Activated CD4-positive, alpha-beta T cell treated with anti-CD3 and anti-CD28 coated beads for 36 hours (primary cell): ENCODE measurements at regions of chr4 and their contacts with region 1.

Region 1: DNA sequence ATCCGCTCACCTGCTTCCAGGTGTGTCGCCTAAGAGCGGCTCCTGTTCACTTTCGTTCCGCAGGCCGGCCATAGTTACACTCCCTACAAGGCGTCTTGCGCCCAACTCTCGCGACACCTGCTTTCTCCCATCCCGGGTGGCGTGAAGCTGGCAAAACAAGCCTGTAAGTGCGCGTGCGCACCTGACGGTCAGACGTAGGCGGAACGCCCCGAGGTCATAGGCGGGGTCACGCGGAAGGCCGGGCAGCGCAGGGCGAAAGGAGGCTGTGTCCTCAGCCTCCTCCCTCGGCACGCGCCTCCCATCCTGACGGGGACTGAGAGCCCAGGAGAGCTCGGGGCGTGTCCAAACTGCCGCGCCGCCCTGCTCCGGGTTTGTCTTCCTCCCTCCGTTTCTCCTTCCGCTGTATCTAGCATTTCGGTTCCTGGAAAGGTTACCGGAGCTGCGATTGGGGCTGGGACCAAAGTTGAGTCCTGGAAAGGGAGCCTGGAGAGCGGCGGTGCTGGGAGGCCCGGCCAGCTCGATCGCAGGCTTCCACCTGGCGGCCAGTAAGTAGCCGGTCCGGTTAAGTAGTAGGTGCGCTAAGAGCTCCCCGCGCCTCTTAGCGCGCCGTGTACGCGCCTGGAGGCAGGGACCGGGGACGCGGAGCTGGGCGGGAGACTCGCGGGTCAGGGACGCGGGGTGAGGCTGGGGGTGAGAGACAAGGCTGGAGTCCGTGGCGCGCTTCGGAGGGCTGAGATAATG is at the starts of genes ABHD18 and MFSD8:
- DNase-seq: peak; percentile 100
- ATAC-seq: peak; percentile 97
- H3K4me3 Mint-ChIP-seq: peak within 1 kb of the TSS; percentile 90
- H3K27ac Mint-ChIP-seq: peak within 1 kb of the TSS; percentile 97
- H3K4me1 Mint-ChIP-seq: peaks cover 32% of the 10 kb centered on the region
- H3K27me3 Mint-ChIP-seq: no peaks in the 10 kb centered on the region
- total RNA-seq, gene ABHD18: 23.5 to 24.2 TPM
- total RNA-seq, gene MFSD8: 10.2 to 13.8 TPM

Region 2: DNA sequence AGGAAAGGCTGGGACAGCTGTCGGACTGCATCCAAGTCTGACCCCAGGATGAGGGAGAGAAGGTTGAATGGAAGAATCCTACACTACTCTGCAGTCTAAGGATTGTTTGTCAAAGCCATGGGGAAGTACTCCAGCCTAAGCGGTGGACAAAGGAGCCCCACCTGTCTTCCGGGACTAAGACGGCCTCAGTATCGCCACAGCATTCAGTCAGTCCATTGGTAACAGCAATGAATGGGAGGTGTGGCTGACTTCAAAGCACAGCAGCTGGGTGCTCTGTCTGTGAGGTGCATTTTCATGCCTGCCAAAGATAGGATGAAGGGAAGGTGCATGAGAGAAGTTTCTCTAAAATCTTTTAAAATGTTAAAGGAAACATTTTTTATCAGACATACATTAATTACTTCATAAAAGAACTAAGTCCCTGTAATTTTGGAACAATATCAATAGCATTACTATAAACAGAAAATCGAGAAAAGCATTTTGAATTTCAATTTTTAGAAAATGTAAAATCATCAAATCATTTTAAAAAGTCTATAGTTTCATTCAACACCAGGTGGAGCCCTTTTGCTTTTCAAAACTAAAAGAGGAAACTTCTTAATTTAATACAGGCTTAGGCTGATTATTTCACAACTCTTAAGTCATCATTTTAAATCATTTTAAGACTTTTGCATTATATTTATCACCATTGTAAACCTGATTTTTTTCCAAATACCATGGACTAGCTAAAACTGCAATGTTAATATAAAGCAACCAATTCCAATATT is 360.1 kb before region 1 on chr4:
- CTCF ChIA-PET with region 1: no interaction called
- POLR2A ChIA-PET with region 1: no interaction called
- intact Hi-C with region 1: no loop called
- DNase-seq: no peak
- ATAC-seq: no peak
- H3K4me3 Mint-ChIP-seq: no peak overlapping the region
- H3K27ac Mint-ChIP-seq: no peak overlapping the region
- H3K4me1 Mint-ChIP-seq: no peaks in the 10 kb centered on the region
- H3K27me3 Mint-ChIP-seq: peaks cover 7% of the 10 kb centered on the region

Region 3: DNA sequence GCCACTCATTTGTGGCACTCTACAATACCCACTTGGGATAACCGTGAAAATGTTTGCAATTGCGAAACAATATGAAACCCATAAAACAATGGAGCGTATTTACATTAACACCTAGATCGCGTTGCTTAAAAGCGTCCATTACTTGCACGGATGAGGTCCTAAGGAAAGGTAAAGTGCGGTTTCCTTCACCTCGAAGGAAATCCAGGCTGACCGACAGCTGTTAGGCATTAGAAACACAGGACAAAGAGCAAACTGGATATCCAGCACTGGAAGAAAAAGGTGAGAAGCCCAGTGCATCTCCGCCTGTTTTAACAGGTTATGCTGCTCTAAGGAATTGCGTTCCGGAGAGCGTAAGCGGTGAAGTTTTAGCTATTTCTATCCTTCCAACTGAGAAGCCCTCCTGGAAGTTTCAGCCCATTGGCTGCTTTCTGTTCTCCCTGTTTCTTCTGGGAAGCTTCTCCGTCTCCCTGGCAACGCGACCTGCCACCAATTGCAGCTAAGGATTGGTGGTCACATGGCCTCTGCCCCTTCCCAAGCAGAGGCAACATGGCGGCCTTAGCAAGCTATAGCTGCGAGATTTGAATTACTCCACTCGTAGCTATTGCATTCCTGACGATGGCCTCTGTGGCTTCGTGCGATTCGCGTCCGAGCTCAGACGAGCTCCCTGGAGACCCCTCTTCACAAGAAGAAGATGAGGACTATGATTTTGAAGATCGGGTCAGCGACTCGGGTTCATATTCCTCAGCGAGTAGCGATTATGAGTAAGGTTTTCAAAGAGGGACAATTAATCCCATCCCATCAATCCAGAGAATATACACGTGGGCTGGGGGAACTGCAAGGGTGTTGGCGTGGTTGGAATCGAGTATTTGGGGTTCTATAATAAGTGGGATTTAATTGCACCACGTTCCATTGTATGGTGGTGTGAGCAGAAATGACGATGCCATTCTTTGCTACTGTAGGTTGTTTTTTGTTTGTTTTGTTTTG is 332.5 kb before region 1 on chr4 and contains the start of gene INTU:
- CTCF ChIA-PET with region 1: no interaction called
- POLR2A ChIA-PET with region 1: no interaction called
- intact Hi-C with region 1: loop called in 1 of 2 experiments (anchors 2 kb)
- DNase-seq: peak; percentile 72
- ATAC-seq: peak; percentile 99
- H3K4me3 Mint-ChIP-seq: peak within 1 kb of the TSS; percentile 75
- H3K27ac Mint-ChIP-seq: peak within 1 kb of the TSS; percentile 27
- H3K4me1 Mint-ChIP-seq: peaks cover 9% of the 10 kb centered on the region
- H3K27me3 Mint-ChIP-seq: peaks cover 37% of the 10 kb centered on the region
- total RNA-seq, gene INTU: 0.50 to 0.56 TPM

Region 4: DNA sequence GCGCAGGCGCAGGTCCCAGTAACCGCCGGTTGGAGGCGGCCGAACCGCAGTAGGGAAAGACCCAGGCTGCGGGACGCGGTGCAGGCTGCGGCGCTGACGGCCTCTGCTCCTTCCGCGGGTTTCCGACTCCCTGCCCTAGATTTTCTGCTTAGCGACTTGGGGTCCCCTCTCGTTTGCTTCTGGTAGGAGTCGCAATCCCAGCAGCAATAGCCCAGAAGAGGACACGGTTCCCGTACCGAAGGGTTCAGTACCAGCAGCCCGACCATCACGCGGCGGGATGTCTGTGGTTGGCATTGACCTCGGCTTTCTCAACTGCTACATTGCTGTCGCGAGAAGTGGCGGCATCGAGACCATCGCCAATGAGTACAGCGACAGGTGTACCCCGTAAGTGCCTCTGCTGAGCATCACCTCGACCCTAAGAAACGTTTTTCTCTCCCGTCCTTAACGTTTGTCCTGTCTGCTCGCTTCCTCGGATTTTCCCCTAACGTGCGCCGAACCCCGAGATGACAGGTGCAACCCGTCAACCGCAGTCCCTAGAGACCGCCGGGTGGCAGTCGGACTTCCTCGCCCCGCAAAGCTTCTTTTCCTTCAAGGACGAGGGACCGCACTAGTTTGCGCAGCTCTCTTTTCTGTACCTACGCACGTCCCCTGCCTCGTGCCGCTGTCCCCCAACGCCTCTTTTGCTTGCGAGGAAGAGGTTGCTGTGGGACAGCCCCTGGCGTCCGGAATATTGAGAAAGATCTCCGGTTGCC is 182.8 kb before region 1 on chr4 and contains the start of gene HSPA4L:
- CTCF ChIA-PET with region 1: no interaction called
- POLR2A ChIA-PET with region 1: no interaction called
- intact Hi-C with region 1: loop called (anchors 1 to 10 kb)
- DNase-seq: peak; percentile 65
- ATAC-seq: peak; percentile 59
- H3K4me3 Mint-ChIP-seq: peak within 1 kb of the TSS; percentile 74
- H3K27ac Mint-ChIP-seq: peak within 1 kb of the TSS; percentile 86
- H3K4me1 Mint-ChIP-seq: peaks cover 14% of the 10 kb centered on the region
- H3K27me3 Mint-ChIP-seq: peaks cover 56% of the 10 kb centered on the region
- total RNA-seq, gene HSPA4L: 2.7 to 3.0 TPM

Region 5: GRCh38 chr4:127880764-127881562 is 84.3 kb before region 1 on chr4 and contains the start of gene PLK4:
- CTCF ChIA-PET with region 1: interaction called, 4 read pairs
- POLR2A ChIA-PET with region 1: interaction called, 14 read pairs
- intact Hi-C with region 1: loop called (anchors 1 kb)
- DNase-seq: peak; percentile 97
- ATAC-seq: peak; percentile 97
- H3K4me3 Mint-ChIP-seq: peak within 1 kb of the TSS; percentile 97
- H3K27ac Mint-ChIP-seq: peak within 1 kb of the TSS; percentile 98
- H3K4me1 Mint-ChIP-seq: peaks cover 24% of the 10 kb centered on the region
- H3K27me3 Mint-ChIP-seq: no peaks in the 10 kb centered on the region
- total RNA-seq, gene PLK4: 44.4 to 52.3 TPM

Region 6: GRCh38 chr4:127997534-127998388 is 32.5 kb after region 1 on chr4:
- CTCF ChIA-PET with region 1: interaction called, 4 read pairs
- POLR2A ChIA-PET with region 1: interaction called, 6 read pairs
- intact Hi-C with region 1: loop called in 1 of 2 experiments (anchors 1 kb)
- DNase-seq: peak; percentile 62
- ATAC-seq: peak; percentile 99
- H3K4me3 Mint-ChIP-seq: no peak overlapping the region
- H3K27ac Mint-ChIP-seq: peak overlapping the region; percentile 59
- H3K4me1 Mint-ChIP-seq: peaks cover 27% of the 10 kb centered on the region
- H3K27me3 Mint-ChIP-seq: no peaks in the 10 kb centered on the region

Region 7: DNA sequence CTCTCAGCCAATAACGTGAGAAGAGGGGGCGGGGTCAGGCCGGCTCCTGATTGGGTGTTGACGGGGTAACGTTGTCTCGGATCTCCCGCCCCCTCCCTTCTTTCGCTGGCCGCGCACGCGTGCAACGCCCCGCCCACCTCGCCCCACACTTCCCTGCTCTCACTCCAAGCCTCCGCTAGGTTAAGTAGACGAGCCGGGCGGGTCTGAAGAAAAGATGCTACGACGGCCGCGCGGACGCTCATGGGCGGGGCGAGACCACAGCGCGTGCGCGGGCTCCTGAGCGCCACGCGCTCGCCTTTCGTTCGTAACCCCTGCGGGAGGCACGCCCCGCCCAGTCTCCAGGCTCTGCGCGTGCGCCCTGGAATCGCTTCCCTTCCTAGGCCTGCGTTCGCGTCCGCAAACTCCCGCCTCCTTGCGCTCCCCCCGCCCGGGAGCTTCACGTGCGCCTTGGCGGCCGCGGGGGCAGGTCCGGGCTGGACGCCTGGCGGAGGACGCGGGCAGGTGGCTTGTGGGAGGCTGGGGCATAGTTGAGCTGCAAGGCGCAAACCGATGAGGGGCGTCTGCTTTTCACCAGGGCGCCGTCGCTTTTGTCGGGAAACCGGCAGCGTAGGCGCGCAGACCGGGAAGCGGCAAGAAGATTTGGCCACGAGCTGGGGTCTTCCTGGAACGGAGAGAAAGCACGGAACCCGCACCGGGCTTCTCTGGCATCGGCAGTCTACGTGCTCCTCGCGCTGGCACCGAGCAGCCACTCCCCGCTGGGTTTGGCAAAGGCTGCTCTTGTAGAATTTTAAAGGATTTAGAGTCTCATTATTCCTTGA is 322.8 kb after region 1 on chr4:
- CTCF ChIA-PET with region 1: interaction called, 4 read pairs
- POLR2A ChIA-PET with region 1: interaction called, 4 read pairs
- intact Hi-C with region 1: loop called (anchors 1 kb)
- DNase-seq: peak; percentile 100
- ATAC-seq: peak; percentile 85
- H3K4me3 Mint-ChIP-seq: peak overlapping the region; percentile 79
- H3K27ac Mint-ChIP-seq: peak overlapping the region; percentile 93
- H3K4me1 Mint-ChIP-seq: peaks cover 27% of the 10 kb centered on the region
- H3K27me3 Mint-ChIP-seq: no peaks in the 10 kb centered on the region

Region 8: GRCh38 chr4:128768373-128768996 is 803.3 kb after region 1 on chr4:
- CTCF ChIA-PET with region 1: no interaction called
- POLR2A ChIA-PET with region 1: no interaction called
- intact Hi-C with region 1: no loop called
- DNase-seq: no peak
- ATAC-seq: peak; percentile 42
- H3K4me3 Mint-ChIP-seq: no peak overlapping the region
- H3K27ac Mint-ChIP-seq: no peak overlapping the region
- H3K4me1 Mint-ChIP-seq: peaks cover 3% of the 10 kb centered on the region
- H3K27me3 Mint-ChIP-seq: no peaks in the 10 kb centered on the region

Region 9: GRCh38 chr4:129093191-129093920 is 1128.1 kb after region 1 on chr4 and contains the start of gene SCLT1:
- CTCF ChIA-PET with region 1: no interaction called
- POLR2A ChIA-PET with region 1: no interaction called
- intact Hi-C with region 1: loop called (anchors 1 to 2 kb)
- DNase-seq: peak; percentile 98
- ATAC-seq: peak; percentile 94
- H3K4me3 Mint-ChIP-seq: no peak within 1 kb of the TSS
- H3K27ac Mint-ChIP-seq: peak within 1 kb of the TSS; percentile 35
- H3K4me1 Mint-ChIP-seq: peaks cover 27% of the 10 kb centered on the region
- H3K27me3 Mint-ChIP-seq: no peaks in the 10 kb centered on the region
- total RNA-seq, gene SCLT1: 18.7 to 19.3 TPM